ENCODE measurements at regions of chr1 and their contacts with region 1.

Region 1: DNA sequence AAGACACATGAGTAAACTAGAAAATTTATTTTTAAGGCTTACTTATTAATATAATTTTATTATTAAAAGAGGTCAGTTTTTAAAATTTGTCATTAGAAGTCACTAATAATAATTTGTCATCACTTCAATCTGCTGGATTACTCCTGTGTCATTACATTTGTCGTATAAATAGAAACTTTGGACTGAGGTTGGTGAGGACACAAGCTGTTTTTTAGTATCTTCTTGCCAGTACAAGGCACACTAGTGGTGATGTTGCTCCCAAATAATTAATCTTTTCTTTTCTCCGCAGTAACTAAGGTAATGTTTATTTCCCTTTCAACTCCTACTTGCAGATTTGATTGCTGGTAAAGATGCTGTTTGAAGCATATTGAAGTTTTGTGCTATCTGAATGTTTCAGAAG is 59.4 kb upstream of the TENT5C start:
- DNase-seq: no peak
- H3K4me3 Mint-ChIP-seq: no peak overlapping the region
- H3K27ac Mint-ChIP-seq: no peak overlapping the region
- H3K4me1 Mint-ChIP-seq: peaks cover 19% of the 10 kb centered on the region
- H3K27me3 Mint-ChIP-seq: peaks cover 4% of the 10 kb centered on the region

Region 2: GRCh38 chr1:117568999-117569398 is 22.5 kb after region 1 on chr1:
- intact Hi-C with region 1: loop called (anchors 1 kb)
- DNase-seq: no peak
- H3K4me3 Mint-ChIP-seq: no peak overlapping the region
- H3K27ac Mint-ChIP-seq: no peak overlapping the region
- H3K4me1 Mint-ChIP-seq: peaks cover 18% of the 10 kb centered on the region
- H3K27me3 Mint-ChIP-seq: peaks cover 16% of the 10 kb centered on the region